Activated CD8-positive, alpha-beta memory T cell treated with anti-CD3 and anti-CD28 coated beads, Interleukin-2, amount 10 ng/mL, durations not matched to agents 7 days and 5 days (primary cell): ENCODE measurements at regions of chr1 and their contacts with region 1.

Region 1: GRCh38 chr1:223700942-223701637 is 11.2 kb upstream of the CAPN2 start:
- DNase-seq: no peak
- ATAC-seq: peak; percentile 56
- H3K4me3 Mint-ChIP-seq: no peak overlapping the region
- H3K27ac Mint-ChIP-seq: no peak overlapping the region
- H3K4me1 Mint-ChIP-seq: peaks cover 38% of the 10 kb centered on the region
- H3K27me3 Mint-ChIP-seq: no peaks in the 10 kb centered on the region

Region 2: DNA sequence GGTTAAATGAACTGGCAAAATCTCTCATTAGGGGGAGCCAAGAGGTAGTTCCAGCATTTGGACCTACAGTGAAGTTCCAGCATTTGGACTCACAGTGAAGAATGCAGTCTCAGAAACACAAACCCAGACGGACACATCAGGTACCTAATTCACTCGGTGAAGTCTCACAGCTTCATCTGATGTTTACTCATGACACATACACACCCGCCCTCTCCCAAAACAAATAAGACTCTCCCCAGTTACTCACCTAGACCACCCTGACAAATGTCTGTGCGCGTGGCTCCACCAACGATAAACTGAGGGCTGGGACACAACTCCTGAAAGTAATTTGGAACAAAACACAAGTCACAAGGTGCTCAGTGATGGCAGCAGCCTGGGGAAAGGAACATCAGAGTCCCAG is 47.0 kb before region 1 on chr1:
- CTCF ChIA-PET with region 1: no interaction called
- DNase-seq: no peak
- ATAC-seq: no peak
- H3K4me3 Mint-ChIP-seq: no peak overlapping the region
- H3K27ac Mint-ChIP-seq: no peak overlapping the region
- H3K4me1 Mint-ChIP-seq: no peaks in the 10 kb centered on the region
- H3K27me3 Mint-ChIP-seq: peaks cover 27% of the 10 kb centered on the region

Region 3: DNA sequence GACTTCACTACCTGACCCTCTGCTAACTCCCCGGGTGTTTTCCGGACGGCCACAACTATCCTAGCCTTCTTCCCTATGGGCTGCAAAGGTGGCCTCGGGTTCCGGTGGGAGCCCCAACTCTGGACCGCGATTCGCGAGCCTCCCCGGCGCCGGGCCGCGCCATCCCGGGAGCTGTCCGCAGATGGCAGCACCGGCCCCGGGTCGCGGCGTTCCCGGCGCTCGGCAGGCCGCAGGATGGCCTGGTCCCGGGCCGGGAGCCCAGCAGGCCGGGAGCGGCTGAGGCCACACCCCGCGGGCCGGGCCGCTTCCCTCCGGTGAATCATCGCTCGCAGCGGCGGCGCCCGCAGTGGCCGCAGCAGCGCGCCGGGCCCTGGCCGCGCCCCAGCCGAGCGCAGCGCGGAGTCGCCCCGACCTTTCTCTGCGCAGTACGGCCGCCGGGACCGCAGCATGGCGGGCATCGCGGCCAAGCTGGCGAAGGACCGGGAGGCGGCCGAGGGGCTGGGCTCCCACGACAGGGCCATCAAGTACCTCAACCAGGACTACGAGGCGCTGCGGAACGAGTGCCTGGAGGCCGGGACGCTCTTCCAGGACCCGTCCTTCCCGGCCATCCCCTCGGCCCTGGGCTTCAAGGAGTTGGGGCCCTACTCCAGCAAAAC is 11.2 kb after region 1 on chr1 and contains the start of gene CAPN2:
- CTCF ChIA-PET with region 1: interaction called, 11 read pairs
- DNase-seq: peak; percentile 75
- ATAC-seq: peak; percentile 65
- H3K4me3 Mint-ChIP-seq: peak within 1 kb of the TSS; percentile 84
- H3K27ac Mint-ChIP-seq: peak within 1 kb of the TSS; percentile 96
- H3K4me1 Mint-ChIP-seq: peaks cover 53% of the 10 kb centered on the region
- H3K27me3 Mint-ChIP-seq: no peaks in the 10 kb centered on the region
- total RNA-seq, gene CAPN2: 183 to 255 TPM

Region 4: DNA sequence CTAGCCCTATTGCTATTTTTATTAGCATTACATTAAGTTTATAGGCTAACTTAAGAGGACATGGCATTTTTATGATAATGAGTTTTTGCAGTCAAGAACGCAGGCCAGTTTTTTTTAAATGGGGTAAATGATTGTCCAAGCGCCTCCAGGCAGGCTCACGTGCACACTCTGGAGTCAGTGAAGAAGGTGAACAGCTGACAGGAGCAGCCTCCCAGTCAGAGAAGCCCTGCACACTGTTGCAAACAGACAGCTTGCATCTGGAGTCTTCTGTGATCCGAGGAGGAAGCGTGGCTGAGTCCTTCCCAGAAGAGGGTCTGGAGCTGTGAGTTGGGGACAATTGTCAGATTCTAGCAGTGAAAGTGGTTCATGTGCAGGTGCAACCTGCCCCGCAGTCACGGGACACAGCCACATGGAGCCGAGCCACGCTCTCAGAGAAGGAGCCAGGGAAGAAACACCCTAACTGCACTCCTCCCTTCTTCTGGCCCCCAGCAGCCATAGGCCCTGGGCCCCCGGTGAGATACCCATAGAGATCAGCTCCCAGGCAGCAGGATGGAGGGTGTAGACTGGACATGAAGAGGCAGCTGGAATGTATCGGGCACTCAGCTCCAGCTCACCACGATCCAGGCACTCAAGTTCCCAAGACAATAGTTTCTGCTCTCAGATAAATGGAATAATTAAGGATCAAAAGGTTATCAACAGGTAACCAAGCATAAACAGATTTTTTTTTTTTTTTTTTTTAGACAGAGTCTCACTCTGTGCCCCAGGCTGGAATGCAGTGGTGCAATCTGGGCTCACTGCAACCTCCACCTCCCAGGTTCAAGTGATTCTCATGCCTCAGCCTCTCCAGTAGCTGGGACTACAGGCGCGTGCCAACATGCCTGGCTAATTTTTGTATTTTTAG is 37.6 kb after region 1 on chr1:
- CTCF ChIA-PET with region 1: interaction called, 12 read pairs
- DNase-seq: no peak
- ATAC-seq: no peak
- H3K4me3 Mint-ChIP-seq: no peak overlapping the region
- H3K27ac Mint-ChIP-seq: no peak overlapping the region
- H3K4me1 Mint-ChIP-seq: peaks cover 8% of the 10 kb centered on the region
- H3K27me3 Mint-ChIP-seq: no peaks in the 10 kb centered on the region

Region 5: GRCh38 chr1:223771814-223772770 is 71.0 kb after region 1 on chr1:
- CTCF ChIA-PET with region 1: interaction called, 10 read pairs
- DNase-seq: peak; percentile 39
- ATAC-seq: peak; percentile 26
- H3K4me3 Mint-ChIP-seq: no peak overlapping the region
- H3K27ac Mint-ChIP-seq: peak overlapping the region; percentile 61
- H3K4me1 Mint-ChIP-seq: peaks cover 54% of the 10 kb centered on the region
- H3K27me3 Mint-ChIP-seq: no peaks in the 10 kb centered on the region

Region 6: DNA sequence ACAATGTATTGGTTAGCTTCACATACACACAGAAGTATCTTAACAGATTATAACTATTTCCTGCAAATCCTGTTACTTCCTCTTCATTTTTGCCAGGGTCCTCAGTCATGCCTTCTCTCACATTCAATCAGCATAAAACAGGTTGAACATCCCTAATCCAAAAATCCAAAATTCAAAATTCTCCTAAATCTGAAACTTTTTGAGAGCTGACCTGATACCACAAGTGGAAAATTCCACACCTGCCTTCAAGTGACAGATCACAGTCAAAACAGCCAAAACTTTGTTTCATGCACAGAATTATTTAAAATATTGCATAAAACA is 350.0 kb after region 1 on chr1:
- CTCF ChIA-PET with region 1: interaction called, 17 read pairs
- DNase-seq: no peak
- ATAC-seq: no peak
- H3K4me3 Mint-ChIP-seq: no peak overlapping the region
- H3K27ac Mint-ChIP-seq: no peak overlapping the region
- H3K4me1 Mint-ChIP-seq: peaks cover 2% of the 10 kb centered on the region
- H3K27me3 Mint-ChIP-seq: peaks cover 20% of the 10 kb centered on the region